Breast epithelium (tissue), 4 donors: ENCODE measurements at regions of chr20 and their contacts with region 1.

Region 1: GRCh38 chr20:61112515-61112914 is 139.5 kb upstream of the CDH4 start:
- DNase-seq: no peak
- H3K4me3 ChIP-seq: no peak overlapping the region
- H3K27ac ChIP-seq: no peak overlapping the region
- H3K4me1 ChIP-seq: no peaks in the 10 kb centered on the region
- H3K27me3 ChIP-seq: peaks cover 0 to 3% of the 10 kb centered on the region in 2 donors
- CTCF ChIP-seq: no peak
- POLR2A ChIP-seq: no peak

Region 2: DNA sequence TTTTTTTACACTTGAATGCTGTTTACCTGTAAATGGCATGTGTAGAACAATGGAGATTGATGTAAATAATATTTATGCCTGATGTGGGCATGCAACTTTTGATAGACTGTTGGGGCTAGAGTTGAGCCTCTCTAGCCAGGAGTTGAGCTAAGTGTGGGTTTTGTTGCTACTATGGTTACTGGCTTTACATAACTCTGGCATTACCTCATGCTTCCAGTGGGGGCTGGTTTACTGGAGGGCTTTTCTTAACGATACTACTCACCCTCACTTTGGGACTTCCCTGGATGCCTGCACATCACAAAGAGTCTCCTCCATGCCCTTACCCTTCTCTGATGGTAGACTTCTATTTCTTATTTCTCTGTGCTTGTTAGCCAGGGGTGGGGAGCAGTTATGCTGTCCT is 385.1 kb before region 1 on chr20:
- intact Hi-C with region 1: loop called (anchors 5 kb)
- DNase-seq: no peak
- H3K4me3 ChIP-seq: no peak overlapping the region
- H3K27ac ChIP-seq: no peak overlapping the region
- H3K4me1 ChIP-seq: no peaks in the 10 kb centered on the region
- H3K27me3 ChIP-seq: no peaks in the 10 kb centered on the region
- CTCF ChIP-seq: no peak
- POLR2A ChIP-seq: no peak